ENCODE measurements at regions of chr1 and their contacts with region 1.

Region 1: DNA sequence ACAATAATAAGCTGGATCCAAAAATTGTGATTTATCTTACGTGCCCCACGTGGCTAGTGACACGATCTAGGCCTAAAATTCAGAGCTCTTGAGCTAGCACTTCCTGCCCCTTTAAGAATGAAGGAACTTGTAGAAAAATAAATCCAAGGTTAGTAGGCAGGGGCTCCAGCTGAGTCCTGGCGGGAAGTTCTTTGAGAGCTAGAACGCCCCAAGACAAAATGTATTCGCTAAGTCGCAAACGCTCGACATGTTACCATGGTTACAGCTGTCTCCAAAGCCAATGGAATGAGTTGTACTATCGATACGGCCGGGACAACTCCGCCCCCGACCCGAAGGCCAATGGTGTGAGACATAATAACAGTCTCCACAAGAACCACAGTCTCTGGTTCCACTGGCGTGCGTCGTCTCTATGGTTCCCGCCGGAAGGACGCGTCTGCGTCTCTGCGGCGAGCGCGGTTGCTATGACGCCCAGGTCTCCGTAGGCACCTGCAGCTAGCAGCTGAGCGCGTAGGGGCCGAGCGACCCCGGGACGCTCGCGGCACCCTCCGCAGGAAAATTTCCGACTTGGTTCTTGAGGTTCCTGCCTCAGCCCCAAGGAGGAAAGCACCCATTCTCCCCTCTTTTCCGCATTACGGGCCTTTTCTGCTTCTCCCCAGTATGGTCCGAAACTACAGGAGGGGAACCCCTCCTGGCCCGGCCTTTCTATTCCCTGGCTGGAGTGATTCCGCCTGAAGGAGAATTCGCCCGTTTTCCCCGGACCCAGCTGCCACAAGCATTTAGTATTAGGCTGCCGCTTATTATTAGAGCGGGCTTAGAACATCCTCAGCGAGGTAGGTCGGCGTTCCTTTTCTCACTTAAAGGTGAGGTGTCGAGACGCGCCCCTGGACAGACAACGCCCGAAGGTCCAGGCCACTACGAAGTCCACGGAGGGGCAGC is at the start of gene CCDC30:
- DNase-seq: peak; percentile 93
- ATAC-seq: peak; percentile 100
- H3K4me3 ChIP-seq: peak within 1 kb of the TSS; percentile 71
- H3K27ac ChIP-seq: peak within 1 kb of the TSS; percentile 19; the same call in 1 of the 2 replicates
- H3K4me1 ChIP-seq: peaks cover 5% of the 10 kb centered on the region; the same call in 1 of the 2 replicates
- H3K27me3 ChIP-seq: no peaks in the 10 kb centered on the region
- CTCF ChIP-seq: no peak
- EP300 ChIP-seq: no peak
- POLR2A ChIP-seq: peak; percentile 45
- RAD21 ChIP-seq: no peak
- polyA plus RNA-seq, gene CCDC30: 0.64 to 1.3 TPM

Region 2: GRCh38 chr1:42657971-42658879 is 195.1 kb after region 1 on chr1 and contains the start of gene PPIH:
- CTCF ChIA-PET with region 1: no interaction called
- POLR2A ChIA-PET with region 1: no interaction called
- RAD21 ChIA-PET with region 1: no interaction called
- SMC1A ChIA-PET with region 1: no interaction called
- in situ Hi-C with region 1: no loop called
- intact Hi-C with region 1: loop called (anchors 1 kb)
- DNase-seq: peak; percentile 80
- ATAC-seq: peak; percentile 99
- H3K4me3 ChIP-seq: peak within 1 kb of the TSS; percentile 87
- H3K27ac ChIP-seq: peak within 1 kb of the TSS; percentile 63
- H3K4me1 ChIP-seq: 0 out of 2 replicates have a peak, but pooled peaks cover 2% of the 10 kb centered on the region
- H3K27me3 ChIP-seq: no peaks in the 10 kb centered on the region
- CTCF ChIP-seq: peak in 1 of 3 experiments; percentile 28; a peak in 1 of 6 replicates
- EP300 ChIP-seq: 0 out of 4 replicates have a peak, but pooled peaks of 1 of the 2 experiments have one; percentile 20
- POLR2A ChIP-seq: peak; percentile 91
- RAD21 ChIP-seq: no peak
- polyA plus RNA-seq, gene PPIH: 96.3 to 114 TPM

Measured in GM12878 (cell line).